Left ventricle myocardium inferior (tissue), 1 donor: ENCODE measurements at regions of chr14 and their contacts with region 1.

Region 1: DNA sequence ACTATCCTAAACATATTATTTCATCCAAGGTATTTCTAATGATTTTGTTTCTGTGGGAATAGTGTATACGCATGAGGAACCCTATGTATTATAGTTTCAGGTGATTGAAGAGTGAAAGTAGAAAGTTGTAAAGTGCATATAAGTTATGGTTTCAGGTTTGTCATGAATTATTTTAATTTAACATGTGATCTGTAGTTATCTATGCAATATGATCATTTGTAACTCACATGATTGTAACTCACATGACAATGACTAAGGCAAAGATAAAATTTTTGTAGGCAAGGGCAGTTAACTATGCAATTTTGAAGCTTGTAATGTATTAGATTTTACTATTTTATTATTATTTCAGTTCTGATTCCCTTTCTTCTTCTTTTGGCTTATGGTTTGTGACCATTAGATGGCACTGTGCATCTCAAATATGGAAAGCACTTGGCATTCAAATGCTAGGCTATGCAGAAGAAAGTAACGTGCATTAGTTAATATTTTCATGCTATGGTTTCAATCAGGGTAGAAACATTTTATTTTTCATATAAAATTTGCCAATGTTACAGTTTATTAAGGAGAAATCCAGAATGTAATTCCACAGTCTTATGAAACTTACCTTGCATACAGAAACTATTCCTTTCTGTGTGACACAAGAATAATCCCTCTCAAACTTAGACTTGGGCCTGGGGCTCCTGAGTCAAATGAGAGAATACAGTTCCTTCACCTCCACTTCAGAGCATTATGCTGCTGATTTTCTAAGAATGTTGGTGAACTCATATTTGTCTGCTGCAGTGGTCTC is 15.8 kb upstream of the TMEM30B start:
- DNase-seq: no peak
- H3K4me3 ChIP-seq: no peak overlapping the region
- H3K27ac ChIP-seq: no peak overlapping the region
- H3K4me1 ChIP-seq: peaks cover 6% of the 10 kb centered on the region
- H3K27me3 ChIP-seq: no peaks in the 10 kb centered on the region
- CTCF ChIP-seq: peak; percentile 79

Region 2: GRCh38 chr14:61355892-61356325 is 59.0 kb after region 1 on chr14:
- intact Hi-C with region 1: no loop called
- DNase-seq: peak; percentile 31
- H3K4me3 ChIP-seq: peak overlapping the region; percentile 5
- H3K27ac ChIP-seq: peak overlapping the region; percentile 79
- H3K4me1 ChIP-seq: peaks cover 38% of the 10 kb centered on the region
- H3K27me3 ChIP-seq: no peaks in the 10 kb centered on the region
- CTCF ChIP-seq: no peak

Region 3: GRCh38 chr14:61837336-61838229 is 540.7 kb after region 1 on chr14:
- intact Hi-C with region 1: loop called (anchors 10 kb)
- DNase-seq: peak; percentile 69
- H3K4me3 ChIP-seq: no peak overlapping the region
- H3K27ac ChIP-seq: no peak overlapping the region
- H3K4me1 ChIP-seq: no peaks in the 10 kb centered on the region
- H3K27me3 ChIP-seq: no peaks in the 10 kb centered on the region
- CTCF ChIP-seq: peak; percentile 96